ENCODE measurements at regions of chr16 and their contacts with region 1.

Region 1: DNA sequence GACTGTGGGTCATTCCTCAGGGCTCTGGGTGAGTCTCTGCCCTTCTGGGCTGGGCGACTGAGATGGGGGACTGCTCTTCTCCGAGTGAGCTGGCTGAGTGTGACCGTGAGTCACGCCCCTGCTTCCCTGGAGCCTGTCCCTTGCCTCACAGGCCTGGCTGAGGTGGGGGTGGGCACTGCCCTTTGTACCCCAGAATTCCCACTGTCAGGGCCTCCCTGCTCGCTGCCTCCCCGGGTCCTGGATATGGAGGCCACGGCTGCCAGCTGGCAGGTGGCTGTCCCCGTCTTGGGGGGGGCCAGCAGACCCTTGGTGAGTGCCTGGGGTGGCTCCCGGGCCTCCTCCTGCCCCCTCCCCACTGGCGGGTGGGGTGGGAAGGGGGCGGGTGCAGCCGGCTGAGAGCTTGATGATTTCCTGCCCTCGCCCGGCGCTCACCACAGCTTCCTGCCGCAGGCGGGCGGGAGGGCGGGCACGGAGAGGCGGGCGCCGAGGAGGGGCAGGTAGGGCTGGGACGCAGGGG is at the start of gene LAT:
- DNase-seq: peak; percentile 60 to 91 (median 85)
- ATAC-seq: peak; percentile 69
- H3K4me3 ChIP-seq: peak within 1 kb of the TSS; percentile 95 to 100
- H3K4me3 Mint-ChIP-seq: peak within 1 kb of the TSS; percentile 99
- H3K27ac ChIP-seq: peak within 1 kb of the TSS; percentile 71 to 76
- H3K27ac Mint-ChIP-seq: peak within 1 kb of the TSS; percentile 95
- H3K4me1 ChIP-seq: peaks cover 54% of the 10 kb centered on the region
- H3K4me1 Mint-ChIP-seq: peaks cover 49% of the 10 kb centered on the region
- H3K27me3 ChIP-seq: no peaks in the 10 kb centered on the region
- H3K27me3 Mint-ChIP-seq: no peaks in the 10 kb centered on the region
- CTCF ChIP-seq: no peak
- total RNA-seq, gene LAT: 175 to 176 TPM

Region 2: GRCh38 chr16:28925386-28926228 is 59.1 kb before region 1 on chr16:
- CTCF ChIA-PET with region 1: no interaction called
- POLR2A ChIA-PET with region 1: no interaction called
- intact Hi-C with region 1: no loop called
- DNase-seq: peak; percentile 60 to 93 (median 81)
- ATAC-seq: peak; percentile 66
- H3K4me3 ChIP-seq: peak overlapping the region; percentile 96 to 97
- H3K4me3 Mint-ChIP-seq: peak overlapping the region; percentile 94
- H3K27ac ChIP-seq: peak overlapping the region; percentile 98
- H3K27ac Mint-ChIP-seq: peak overlapping the region; percentile 97
- H3K4me1 ChIP-seq: peaks cover 15% of the 10 kb centered on the region
- H3K4me1 Mint-ChIP-seq: peaks cover 31% of the 10 kb centered on the region
- H3K27me3 ChIP-seq: no peaks in the 10 kb centered on the region
- H3K27me3 Mint-ChIP-seq: no peaks in the 10 kb centered on the region
- CTCF ChIP-seq: no peak

Region 3: DNA sequence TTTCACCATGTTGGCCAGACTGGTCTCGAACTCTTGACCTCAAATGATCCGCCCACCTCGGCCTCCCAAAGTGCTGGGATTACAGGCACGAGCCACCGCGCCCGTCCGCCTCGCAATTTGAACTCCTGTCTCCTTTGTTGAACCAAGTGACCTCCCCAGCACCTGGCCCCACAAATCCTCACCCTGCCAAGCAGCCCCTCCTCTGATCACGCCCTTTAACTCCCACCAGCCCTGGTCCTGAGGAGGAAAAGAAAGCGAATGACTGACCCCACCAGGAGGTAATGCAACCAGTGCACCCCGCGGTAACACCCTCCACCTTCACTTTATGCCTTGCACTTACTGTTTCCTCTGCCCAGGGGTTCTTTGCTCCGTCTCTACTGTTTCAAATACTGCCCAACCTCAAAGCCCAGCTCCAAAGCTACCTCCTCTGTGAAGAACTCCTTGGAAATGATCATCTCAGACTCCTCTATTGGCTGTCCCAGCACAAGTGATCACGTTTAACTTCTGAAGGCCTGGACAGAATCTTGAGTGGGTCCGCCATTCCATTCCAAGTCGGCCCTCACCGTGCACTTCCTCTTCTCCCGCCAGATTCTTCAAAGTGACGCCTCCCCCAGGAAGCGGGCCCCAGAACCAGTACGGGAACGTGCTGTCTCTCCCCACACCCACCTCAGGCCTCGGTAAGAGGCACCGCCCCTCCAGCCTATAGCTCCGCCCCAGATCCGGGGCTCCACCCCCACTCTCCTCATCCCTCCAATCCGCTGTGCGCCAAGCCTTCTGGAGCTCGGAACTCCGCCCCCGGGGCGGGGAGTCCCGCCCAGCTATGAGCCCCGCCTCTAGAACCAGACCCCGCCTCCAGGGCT is 48.5 kb before region 1 on chr16:
- CTCF ChIA-PET with region 1: no interaction called
- POLR2A ChIA-PET with region 1: no interaction called
- intact Hi-C with region 1: no loop called
- DNase-seq: peak; percentile 61 to 89 (median 80)
- ATAC-seq: peak; percentile 100
- H3K4me3 ChIP-seq: peak overlapping the region; percentile 25 to 41
- H3K4me3 Mint-ChIP-seq: peak overlapping the region; percentile 76
- H3K27ac ChIP-seq: no peak overlapping the region
- H3K27ac Mint-ChIP-seq: no peak overlapping the region
- H3K4me1 ChIP-seq: peaks cover 19% of the 10 kb centered on the region
- H3K4me1 Mint-ChIP-seq: peaks cover 15% of the 10 kb centered on the region
- H3K27me3 ChIP-seq: no peaks in the 10 kb centered on the region
- H3K27me3 Mint-ChIP-seq: no peaks in the 10 kb centered on the region
- CTCF ChIP-seq: no peak

Region 4: GRCh38 chr16:28974437-28975157 is 10.1 kb before region 1 on chr16 and contains the start of gene SPNS1:
- CTCF ChIA-PET with region 1: interaction called, 29 read pairs
- POLR2A ChIA-PET with region 1: interaction called, 26 read pairs
- intact Hi-C with region 1: loop called in 1 of 2 experiments (anchors 1 kb)
- DNase-seq: peak; percentile 78 to 95 (median 90)
- ATAC-seq: peak; percentile 87
- H3K4me3 ChIP-seq: peak within 1 kb of the TSS; percentile 68 to 96
- H3K4me3 Mint-ChIP-seq: peak within 1 kb of the TSS; percentile 98
- H3K27ac ChIP-seq: peak within 1 kb of the TSS; percentile 55 to 79
- H3K27ac Mint-ChIP-seq: peak within 1 kb of the TSS; percentile 97
- H3K4me1 ChIP-seq: peaks cover 19% of the 10 kb centered on the region
- H3K4me1 Mint-ChIP-seq: peaks cover 41% of the 10 kb centered on the region
- H3K27me3 ChIP-seq: no peaks in the 10 kb centered on the region
- H3K27me3 Mint-ChIP-seq: no peaks in the 10 kb centered on the region
- CTCF ChIP-seq: no peak
- total RNA-seq, gene SPNS1: 31.7 to 31.8 TPM

Region 5: DNA sequence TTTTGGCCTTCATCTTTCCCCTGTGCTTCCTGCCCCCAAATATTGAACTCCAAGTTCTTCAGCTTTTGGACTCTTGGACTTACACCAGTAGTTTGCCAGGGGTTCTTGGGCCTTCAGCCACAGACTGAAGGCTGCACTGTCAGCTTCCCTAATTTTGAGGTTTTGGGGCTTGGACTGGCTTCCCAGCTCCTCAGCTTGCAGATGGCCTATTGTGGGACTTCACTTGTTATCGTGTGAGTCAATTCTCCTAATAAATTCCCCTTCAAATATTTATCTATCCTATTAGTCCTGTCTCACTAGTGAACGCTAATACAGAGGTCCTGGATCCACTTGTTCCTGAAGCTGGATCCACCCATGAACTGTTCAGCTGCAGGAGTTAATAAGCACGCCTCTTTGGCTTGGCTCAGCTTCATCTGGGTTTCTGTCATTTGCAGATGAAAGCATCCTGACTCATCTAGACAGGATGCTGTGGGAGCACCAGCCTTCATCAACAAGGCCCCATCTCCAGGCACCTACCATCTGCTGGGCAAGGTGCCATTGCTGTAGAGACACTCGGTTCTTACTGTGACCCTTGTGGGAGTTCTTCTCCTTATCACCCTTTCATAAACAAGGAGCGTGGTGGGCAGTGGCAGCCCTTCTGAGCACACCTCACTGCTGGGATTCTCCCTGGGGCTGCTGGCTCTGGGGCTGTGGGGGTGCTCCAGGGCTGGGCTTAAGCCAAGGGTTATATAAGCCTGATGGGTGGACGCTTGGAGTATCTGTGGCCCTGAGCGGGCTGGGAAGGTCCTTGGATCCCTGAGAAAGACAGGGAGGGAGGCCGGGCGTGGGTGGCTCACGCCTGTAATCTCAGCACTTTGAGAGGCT is 23.3 kb after region 1 on chr16:
- CTCF ChIA-PET with region 1: interaction called, 7 read pairs
- POLR2A ChIA-PET with region 1: interaction called, 52 read pairs
- intact Hi-C with region 1: loop called in 1 of 2 experiments (anchors 2 kb)
- DNase-seq: peak in 8 of 9 experiments; percentile 57 to 83 (median 73)
- ATAC-seq: peak; percentile 75
- H3K4me3 ChIP-seq: no peak overlapping the region
- H3K4me3 Mint-ChIP-seq: peak overlapping the region; percentile 55
- H3K27ac ChIP-seq: peak overlapping the region; percentile 4 to 14
- H3K27ac Mint-ChIP-seq: peak overlapping the region; percentile 99
- H3K4me1 ChIP-seq: peaks cover 53% of the 10 kb centered on the region
- H3K4me1 Mint-ChIP-seq: peaks cover 52% of the 10 kb centered on the region
- H3K27me3 ChIP-seq: no peaks in the 10 kb centered on the region
- H3K27me3 Mint-ChIP-seq: no peaks in the 10 kb centered on the region
- CTCF ChIP-seq: no peak

Region 6: GRCh38 chr16:29012913-29013553 is 28.4 kb after region 1 on chr16:
- CTCF ChIA-PET with region 1: interaction called, 7 read pairs
- POLR2A ChIA-PET with region 1: interaction called, 52 read pairs
- intact Hi-C with region 1: loop called in 1 of 2 experiments (anchors 2 kb)
- DNase-seq: peak in 5 of 9 experiments; percentile 48 to 85 (median 66)
- ATAC-seq: peak; percentile 70
- H3K4me3 ChIP-seq: no peak overlapping the region
- H3K4me3 Mint-ChIP-seq: peak overlapping the region; percentile 33
- H3K27ac ChIP-seq: peak overlapping the region in 1 of 2 experiments; percentile 56
- H3K27ac Mint-ChIP-seq: peak overlapping the region; percentile 95
- H3K4me1 ChIP-seq: peaks cover 60% of the 10 kb centered on the region
- H3K4me1 Mint-ChIP-seq: peaks cover 51% of the 10 kb centered on the region
- H3K27me3 ChIP-seq: no peaks in the 10 kb centered on the region
- H3K27me3 Mint-ChIP-seq: no peaks in the 10 kb centered on the region
- CTCF ChIP-seq: no peak

Region 7: DNA sequence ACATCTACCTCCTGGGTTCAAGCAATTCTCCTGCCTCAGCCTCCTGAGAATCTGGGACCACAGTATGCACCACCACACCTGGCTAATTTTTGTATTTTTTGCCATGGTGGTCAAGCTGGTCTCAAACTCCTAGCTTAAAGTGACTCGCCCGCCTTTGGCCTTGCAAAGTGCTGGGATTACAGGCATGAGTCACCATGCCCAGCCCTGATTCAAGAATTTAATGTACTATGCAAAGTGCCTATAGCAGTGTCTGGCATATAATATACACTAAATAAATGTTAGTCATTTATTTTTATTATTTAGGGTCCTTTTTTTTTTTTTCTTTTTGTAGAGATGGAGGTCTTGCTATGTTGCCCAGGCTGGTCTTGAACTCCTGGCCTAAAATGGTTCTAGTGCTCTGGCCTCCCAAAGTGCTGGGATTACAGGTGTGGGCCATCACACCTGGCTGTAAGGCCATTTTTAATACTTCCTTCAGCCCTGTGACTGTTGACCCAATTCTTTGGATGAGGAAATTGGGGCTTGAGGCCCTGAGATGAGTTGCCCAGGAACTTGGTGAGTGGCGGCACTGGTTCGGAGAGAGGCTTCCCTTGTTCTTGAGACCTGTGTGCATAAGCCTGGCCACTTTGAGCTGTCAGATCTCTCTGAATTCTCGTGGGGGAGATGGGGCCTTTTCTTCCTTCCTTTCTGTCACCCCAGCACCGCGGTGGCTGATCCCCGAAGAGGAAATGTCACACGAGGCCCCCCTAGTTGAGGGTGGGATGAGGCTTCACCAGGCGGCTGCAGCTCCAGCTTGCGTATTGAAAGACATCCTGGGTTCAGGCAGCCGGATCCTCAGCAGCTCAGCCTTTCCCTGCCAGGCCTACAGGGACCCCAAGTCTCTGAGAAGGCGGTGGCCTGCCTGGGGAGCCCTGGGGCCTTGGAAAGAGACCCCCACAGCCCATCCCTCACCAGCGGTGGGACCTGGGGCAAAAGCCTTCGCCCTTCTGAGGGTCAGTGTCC is 38.9 kb after region 1 on chr16:
- CTCF ChIA-PET with region 1: interaction called, 5 read pairs
- POLR2A ChIA-PET with region 1: interaction called, 24 read pairs
- intact Hi-C with region 1: no loop called
- DNase-seq: peak in 6 of 9 experiments; percentile 30 to 67 (median 44)
- ATAC-seq: peak; percentile 47
- H3K4me3 ChIP-seq: peak overlapping the region in 1 of 2 experiments; percentile 22
- H3K4me3 Mint-ChIP-seq: peak overlapping the region; percentile 64
- H3K27ac ChIP-seq: peak overlapping the region; percentile 13 to 60
- H3K27ac Mint-ChIP-seq: peak overlapping the region; percentile 91
- H3K4me1 ChIP-seq: peaks cover 60% of the 10 kb centered on the region
- H3K4me1 Mint-ChIP-seq: peaks cover 70% of the 10 kb centered on the region
- H3K27me3 ChIP-seq: no peaks in the 10 kb centered on the region
- H3K27me3 Mint-ChIP-seq: no peaks in the 10 kb centered on the region
- CTCF ChIP-seq: no peak

Region 8: GRCh38 chr16:29029168-29029994 is 44.7 kb after region 1 on chr16:
- CTCF ChIA-PET with region 1: interaction called, 8 read pairs
- POLR2A ChIA-PET with region 1: interaction called, 23 read pairs
- intact Hi-C with region 1: loop called in 1 of 2 experiments (anchors 1 kb)
- DNase-seq: peak in 8 of 9 experiments; percentile 58 to 88 (median 78)
- ATAC-seq: peak; percentile 98
- H3K4me3 ChIP-seq: peak overlapping the region in 1 of 2 experiments; percentile 35
- H3K4me3 Mint-ChIP-seq: no peak overlapping the region
- H3K27ac ChIP-seq: no peak overlapping the region
- H3K27ac Mint-ChIP-seq: peak overlapping the region; percentile 66
- H3K4me1 ChIP-seq: peaks cover 33% of the 10 kb centered on the region
- H3K4me1 Mint-ChIP-seq: peaks cover 44% of the 10 kb centered on the region
- H3K27me3 ChIP-seq: no peaks in the 10 kb centered on the region
- H3K27me3 Mint-ChIP-seq: no peaks in the 10 kb centered on the region
- CTCF ChIP-seq: no peak